PC-3 (cell line): ENCODE measurements at regions of chr1 and their contacts with region 1.

Region 1: GRCh38 chr1:151839457-151840405 is at the start of gene C2CD4D:
- DNase-seq: peak; percentile 91
- ATAC-seq: peak; percentile 81
- H3K4me3 ChIP-seq: peak within 1 kb of the TSS; percentile 73
- H3K27ac ChIP-seq: peak within 1 kb of the TSS; percentile 97
- H3K4me1 ChIP-seq: peaks cover 51% of the 10 kb centered on the region
- H3K27me3 ChIP-seq: no peaks in the 10 kb centered on the region
- CTCF ChIP-seq: no peak
- total RNA-seq, gene C2CD4D: 0.58 and 2.8 TPM in 2 replicates

Region 2: GRCh38 chr1:151346769-151347522 is 492.8 kb before region 1 on chr1 and contains the start of gene RFX5:
- CTCF ChIA-PET with region 1: no interaction called
- POLR2A ChIA-PET with region 1: no interaction called
- intact Hi-C with region 1: loop called (anchors 10 kb)
- DNase-seq: peak; percentile 100
- ATAC-seq: peak; percentile 98
- H3K4me3 ChIP-seq: peak within 1 kb of the TSS; percentile 76
- H3K27ac ChIP-seq: peak within 1 kb of the TSS; percentile 85
- H3K4me1 ChIP-seq: peaks cover 14% of the 10 kb centered on the region
- H3K27me3 ChIP-seq: no peaks in the 10 kb centered on the region
- CTCF ChIP-seq: no peak
- total RNA-seq, gene RFX5: 34.1 and 41.0 TPM in 2 replicates

Region 3: GRCh38 chr1:151539990-151540981 is 299.4 kb before region 1 on chr1 and contains the start of gene TUFT1:
- CTCF ChIA-PET with region 1: interaction called, 3 read pairs
- POLR2A ChIA-PET with region 1: interaction called, 4 read pairs
- intact Hi-C with region 1: loop called (anchors 1 kb)
- DNase-seq: peak; percentile 97
- ATAC-seq: peak; percentile 77
- H3K4me3 ChIP-seq: peak within 1 kb of the TSS; percentile 81
- H3K27ac ChIP-seq: peak within 1 kb of the TSS; percentile 86
- H3K4me1 ChIP-seq: peaks cover 61% of the 10 kb centered on the region
- H3K27me3 ChIP-seq: no peaks in the 10 kb centered on the region
- CTCF ChIP-seq: no peak
- total RNA-seq, gene TUFT1: 33.9 and 46.9 TPM in 2 replicates

Region 4: DNA sequence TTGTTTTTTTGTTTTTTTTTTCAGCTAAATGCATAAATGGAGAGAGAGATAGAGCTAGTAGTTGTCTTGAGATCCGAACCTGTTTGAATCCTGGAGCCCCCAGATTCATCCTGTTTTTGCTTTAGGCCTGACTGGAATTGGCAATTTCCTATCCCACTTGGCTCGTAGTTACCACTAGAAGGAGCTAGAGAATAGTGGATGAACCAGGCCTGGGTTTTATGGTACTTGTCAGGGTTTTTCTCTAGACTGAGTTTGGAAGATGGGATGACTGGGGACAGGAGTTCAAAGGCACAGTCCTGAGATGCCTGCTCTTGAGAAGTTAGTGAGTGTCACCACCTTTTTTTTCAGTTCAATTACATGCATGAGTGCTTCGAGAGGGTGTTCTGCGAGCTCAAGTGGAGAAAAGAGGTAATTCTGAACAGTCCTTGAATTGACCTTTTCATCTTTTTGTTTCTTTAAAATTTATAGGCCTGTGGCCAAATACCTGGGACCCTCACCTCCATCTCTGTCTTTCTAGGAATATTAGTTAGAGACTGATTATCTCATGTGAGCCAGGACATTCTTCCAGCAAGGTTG is 146.6 kb before region 1 on chr1:
- CTCF ChIA-PET with region 1: interaction called, 13 read pairs
- POLR2A ChIA-PET with region 1: no interaction called
- intact Hi-C with region 1: loop called (anchors 1 kb)
- DNase-seq: peak; percentile 72
- ATAC-seq: peak; percentile 79
- H3K4me3 ChIP-seq: no peak overlapping the region
- H3K27ac ChIP-seq: no peak overlapping the region
- H3K4me1 ChIP-seq: no peaks in the 10 kb centered on the region
- H3K27me3 ChIP-seq: no peaks in the 10 kb centered on the region
- CTCF ChIP-seq: peak; percentile 97

Region 5: GRCh38 chr1:151762941-151763921 is 76.5 kb before region 1 on chr1 and contains the start of gene MRPL9:
- CTCF ChIA-PET with region 1: interaction called, 3 read pairs
- POLR2A ChIA-PET with region 1: no interaction called
- intact Hi-C with region 1: loop called (anchors 1 kb)
- DNase-seq: peak; percentile 89
- ATAC-seq: peak; percentile 98
- H3K4me3 ChIP-seq: peak within 1 kb of the TSS; percentile 77
- H3K27ac ChIP-seq: peak within 1 kb of the TSS; percentile 47
- H3K4me1 ChIP-seq: peaks cover 36% of the 10 kb centered on the region
- H3K27me3 ChIP-seq: no peaks in the 10 kb centered on the region
- CTCF ChIP-seq: no peak
- total RNA-seq, gene MRPL9: 229 and 260 TPM in 2 replicates

Region 6: GRCh38 chr1:151881456-151881855 is 41.7 kb after region 1 on chr1:
- CTCF ChIA-PET with region 1: interaction called, 6 read pairs
- POLR2A ChIA-PET with region 1: interaction called, 4 read pairs
- intact Hi-C with region 1: loop called (anchors 1 kb)
- DNase-seq: peak; percentile 23
- ATAC-seq: 0 out of 2 replicates have a peak, but pooled peaks have one; percentile 43
- H3K4me3 ChIP-seq: no peak overlapping the region
- H3K27ac ChIP-seq: no peak overlapping the region
- H3K4me1 ChIP-seq: peaks cover 12% of the 10 kb centered on the region
- H3K27me3 ChIP-seq: no peaks in the 10 kb centered on the region
- CTCF ChIP-seq: peak; percentile 48; the same call in 1 of the 2 replicates